Ovary (tissue), 10 donors: ENCODE measurements at regions of chr2 and their contacts with region 1.

Region 1: GRCh38 chr2:30711646-30712085 is 95.6 kb downstream of the CAPN13 start:
- DNase-seq: peak; percentile 51 to 76 (median 67)
- H3K4me3 ChIP-seq: no peak overlapping the region
- H3K27ac ChIP-seq: no peak overlapping the region
- H3K4me1 ChIP-seq: no peaks in the 10 kb centered on the region
- H3K27me3 ChIP-seq: no peaks in the 10 kb centered on the region
- CTCF ChIP-seq: peak; percentile 52 to 76 (median 75)
- EP300 ChIP-seq: no peak
- POLR2A ChIP-seq: no peak

Region 2: GRCh38 chr2:30165050-30165520 is 546.6 kb before region 1 on chr2:
- intact Hi-C with region 1: loop called (anchors 2 to 5 kb)
- DNase-seq: peak in 3 of 5 donors; percentile 30 to 62 (median 41)
- H3K4me3 ChIP-seq: no peak overlapping the region
- H3K27ac ChIP-seq: no peak overlapping the region
- H3K4me1 ChIP-seq: no peaks in the 10 kb centered on the region
- H3K27me3 ChIP-seq: no peaks in the 10 kb centered on the region
- CTCF ChIP-seq: peak; percentile 78 to 85 (median 79)
- EP300 ChIP-seq: no peak
- POLR2A ChIP-seq: no peak

Region 3: DNA sequence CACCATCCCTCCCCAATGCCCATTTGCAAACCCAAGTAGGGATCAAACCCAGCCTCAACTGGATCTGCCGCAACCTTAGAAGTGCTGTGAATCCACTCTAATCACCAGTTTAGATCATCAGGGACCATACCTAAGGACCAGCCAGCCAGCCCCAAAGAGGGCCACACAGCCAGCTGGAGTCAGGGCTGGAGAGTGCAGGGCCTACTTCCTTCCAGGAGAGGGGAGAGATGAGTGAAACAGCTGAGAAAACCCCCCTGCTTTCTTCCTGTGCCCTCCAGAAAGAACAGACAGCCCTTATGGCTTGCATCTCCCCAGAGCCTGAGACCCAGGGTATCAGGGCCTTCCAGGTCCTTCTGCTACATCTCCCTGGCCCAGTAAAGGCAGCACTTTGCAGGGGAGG is 539.0 kb before region 1 on chr2:
- intact Hi-C with region 1: loop called in 3 of 4 experiments (anchors 5 kb)
- DNase-seq: no peak
- H3K4me3 ChIP-seq: no peak overlapping the region
- H3K27ac ChIP-seq: no peak overlapping the region
- H3K4me1 ChIP-seq: no peaks in the 10 kb centered on the region
- H3K27me3 ChIP-seq: no peaks in the 10 kb centered on the region
- CTCF ChIP-seq: no peak
- EP300 ChIP-seq: no peak
- POLR2A ChIP-seq: no peak

Region 4: DNA sequence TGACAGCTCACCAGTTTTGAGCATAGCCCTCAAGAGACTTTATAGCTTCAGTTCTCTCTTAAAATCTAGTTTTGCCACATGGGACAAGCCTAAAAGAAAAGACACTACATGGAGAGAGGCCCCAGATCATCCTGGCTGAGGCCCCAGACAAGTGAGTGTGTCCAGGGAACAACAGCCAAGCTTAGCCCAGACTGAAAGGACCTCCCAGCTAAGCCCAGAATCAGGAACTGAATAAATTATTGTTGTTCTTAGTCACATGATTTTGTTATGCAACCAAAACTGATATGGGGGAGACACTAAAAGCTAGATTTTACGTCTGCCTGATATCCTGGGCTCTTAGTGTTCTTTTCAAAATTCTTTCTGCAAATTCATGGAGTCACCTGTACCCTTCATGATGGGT is 509.7 kb before region 1 on chr2:
- intact Hi-C with region 1: loop called in 2 of 4 experiments (anchors 5 kb)
- DNase-seq: peak; percentile 66 to 84 (median 76)
- H3K4me3 ChIP-seq: no peak overlapping the region
- H3K27ac ChIP-seq: no peak overlapping the region
- H3K4me1 ChIP-seq: peaks cover 5% of the 10 kb centered on the region
- H3K27me3 ChIP-seq: no peaks in the 10 kb centered on the region
- CTCF ChIP-seq: no peak
- EP300 ChIP-seq: no peak
- POLR2A ChIP-seq: no peak

Region 5: DNA sequence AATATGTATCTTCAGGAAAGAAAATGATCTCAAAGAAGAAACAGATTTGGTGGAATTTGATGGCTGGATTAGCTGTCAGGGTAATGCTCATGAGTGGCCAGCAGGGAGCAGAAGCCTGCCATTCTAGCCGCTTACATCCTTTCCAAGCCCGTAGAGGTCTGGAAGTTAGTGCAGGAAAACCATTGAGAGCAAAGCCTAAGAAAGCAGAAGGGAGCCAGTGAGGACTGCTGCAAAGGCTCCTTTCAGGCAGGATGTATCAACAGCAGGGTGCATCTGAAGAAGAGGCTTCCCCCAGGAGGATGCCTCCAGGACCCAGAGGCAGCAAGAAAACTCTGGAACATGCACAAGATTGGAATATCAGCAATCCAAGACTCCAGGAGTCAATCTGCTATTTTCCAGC is 503.2 kb before region 1 on chr2:
- intact Hi-C with region 1: loop called in 3 of 4 experiments (anchors 2 to 5 kb)
- DNase-seq: peak; percentile 60 to 79 (median 72)
- H3K4me3 ChIP-seq: no peak overlapping the region
- H3K27ac ChIP-seq: no peak overlapping the region
- H3K4me1 ChIP-seq: peaks cover 1% of the 10 kb centered on the region
- H3K27me3 ChIP-seq: no peaks in the 10 kb centered on the region
- CTCF ChIP-seq: peak; percentile 85 to 95 (median 90)
- EP300 ChIP-seq: no peak
- POLR2A ChIP-seq: no peak

Region 6: DNA sequence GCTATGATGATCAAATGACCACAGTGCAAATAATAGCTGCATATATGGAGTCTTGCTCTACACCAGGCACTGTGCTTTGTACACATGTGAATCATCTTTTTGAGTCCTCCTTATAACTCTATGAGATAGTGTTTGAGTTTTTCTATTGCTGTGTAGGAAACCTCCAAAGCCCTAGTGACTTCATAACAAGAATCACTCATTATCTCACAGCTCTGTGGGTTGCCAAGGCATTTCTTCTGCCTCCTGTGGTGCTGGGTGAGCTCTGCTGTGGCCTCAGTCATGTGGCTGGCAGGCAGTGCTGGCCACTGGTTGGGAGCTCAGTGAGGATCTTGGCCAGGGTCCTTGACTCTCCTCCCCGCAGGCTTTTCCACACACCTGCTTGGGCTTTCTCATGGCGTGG is 57.8 kb before region 1 on chr2:
- intact Hi-C with region 1: no loop called
- DNase-seq: no peak
- H3K4me3 ChIP-seq: no peak overlapping the region
- H3K27ac ChIP-seq: no peak overlapping the region
- H3K4me1 ChIP-seq: no peaks in the 10 kb centered on the region
- H3K27me3 ChIP-seq: no peaks in the 10 kb centered on the region
- CTCF ChIP-seq: no peak
- EP300 ChIP-seq: no peak
- POLR2A ChIP-seq: no peak

Region 7: GRCh38 chr2:30915486-30915885 is 203.8 kb after region 1 on chr2:
- intact Hi-C with region 1: no loop called
- DNase-seq: no peak
- H3K4me3 ChIP-seq: no peak overlapping the region
- H3K27ac ChIP-seq: no peak overlapping the region
- H3K4me1 ChIP-seq: no peaks in the 10 kb centered on the region
- H3K27me3 ChIP-seq: no peaks in the 10 kb centered on the region
- CTCF ChIP-seq: no peak
- EP300 ChIP-seq: no peak
- POLR2A ChIP-seq: no peak

Region 8: GRCh38 chr2:31170071-31170698 is 458.5 kb after region 1 on chr2:
- intact Hi-C with region 1: loop called in 1 of 4 experiments (anchors 10 kb)
- DNase-seq: peak in 3 of 5 donors; percentile 22 to 47 (median 28)
- H3K4me3 ChIP-seq: no peak overlapping the region
- H3K27ac ChIP-seq: no peak overlapping the region
- H3K4me1 ChIP-seq: no peaks in the 10 kb centered on the region
- H3K27me3 ChIP-seq: no peaks in the 10 kb centered on the region
- CTCF ChIP-seq: peak in 2 of 3 donors; percentile 14 to 53
- EP300 ChIP-seq: no peak
- POLR2A ChIP-seq: no peak

Region 9: GRCh38 chr2:31333527-31334183 is 622.0 kb after region 1 on chr2:
- intact Hi-C with region 1: loop called in 2 of 4 experiments (anchors 10 kb)
- DNase-seq: peak in 4 of 5 donors; percentile 33 to 54 (median 39)
- H3K4me3 ChIP-seq: no peak overlapping the region
- H3K27ac ChIP-seq: no peak overlapping the region
- H3K4me1 ChIP-seq: no peaks in the 10 kb centered on the region
- H3K27me3 ChIP-seq: no peaks in the 10 kb centered on the region
- CTCF ChIP-seq: peak in 2 of 3 donors; percentile 16 to 40
- EP300 ChIP-seq: no peak
- POLR2A ChIP-seq: no peak